Heart left ventricle (tissue), 16 donors: ENCODE measurements at regions of chr10 and their contacts with region 1.

Region 1: GRCh38 chr10:27111277-27111676 is 11.0 kb upstream of the ANKRD26 start:
- DNase-seq: no peak
- ATAC-seq: no peak
- H3K4me3 ChIP-seq: no peak overlapping the region
- H3K27ac ChIP-seq: no peak overlapping the region
- H3K4me1 ChIP-seq: no peaks in the 10 kb centered on the region
- H3K27me3 ChIP-seq: no peaks in the 10 kb centered on the region
- CTCF ChIP-seq: no peak
- POLR2A ChIP-seq: no peak

Region 2: GRCh38 chr10:27207350-27207749 is 96.1 kb after region 1 on chr10:
- intact Hi-C with region 1: loop called in 1 of 10 experiments (anchors 5 kb)
- DNase-seq: no peak
- ATAC-seq: no peak
- H3K4me3 ChIP-seq: no peak overlapping the region
- H3K27ac ChIP-seq: no peak overlapping the region
- H3K4me1 ChIP-seq: no peaks in the 10 kb centered on the region
- H3K27me3 ChIP-seq: no peaks in the 10 kb centered on the region
- CTCF ChIP-seq: no peak
- POLR2A ChIP-seq: no peak